Mucosa of descending colon (tissue), 3 donors: ENCODE measurements at regions of chr3 and their contacts with region 1.

Region 1: DNA sequence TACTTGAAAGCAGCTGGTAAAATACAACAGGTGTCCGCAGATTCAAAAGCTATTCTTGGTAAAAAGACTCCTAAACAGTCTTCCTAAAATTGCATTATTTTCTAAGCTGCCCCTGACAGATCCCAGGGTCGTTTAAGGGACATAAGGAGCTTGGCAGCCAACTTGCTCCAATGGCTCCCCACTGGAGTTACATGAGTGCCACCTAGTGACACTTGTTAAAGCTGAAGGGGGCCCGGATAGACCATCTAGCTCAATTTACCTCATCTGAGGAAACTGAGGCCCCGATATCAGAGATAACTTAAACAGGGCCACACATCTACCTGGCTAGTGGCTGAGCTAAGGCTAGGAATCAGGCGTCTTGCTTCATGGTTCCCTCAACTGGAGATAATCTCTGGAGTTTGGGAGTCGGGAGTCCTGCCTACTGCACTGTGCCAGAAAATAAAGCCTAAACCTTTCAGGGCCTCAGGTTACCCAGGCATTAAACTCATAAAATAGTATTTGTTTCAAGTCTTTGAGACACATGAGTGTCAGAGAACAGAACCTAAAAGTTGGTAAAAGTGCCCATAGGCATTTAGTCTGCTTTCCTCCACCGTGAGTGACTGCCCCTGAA is 6.5 kb upstream of the TBC1D23 start:
- DNase-seq: peak in 1 of 3 donors; percentile 69
- ATAC-seq: peak; percentile 78
- H3K4me3 ChIP-seq: no peak overlapping the region
- H3K4me1 ChIP-seq: no peaks in the 10 kb centered on the region
- CTCF ChIP-seq: peak; percentile 28

Region 2: DNA sequence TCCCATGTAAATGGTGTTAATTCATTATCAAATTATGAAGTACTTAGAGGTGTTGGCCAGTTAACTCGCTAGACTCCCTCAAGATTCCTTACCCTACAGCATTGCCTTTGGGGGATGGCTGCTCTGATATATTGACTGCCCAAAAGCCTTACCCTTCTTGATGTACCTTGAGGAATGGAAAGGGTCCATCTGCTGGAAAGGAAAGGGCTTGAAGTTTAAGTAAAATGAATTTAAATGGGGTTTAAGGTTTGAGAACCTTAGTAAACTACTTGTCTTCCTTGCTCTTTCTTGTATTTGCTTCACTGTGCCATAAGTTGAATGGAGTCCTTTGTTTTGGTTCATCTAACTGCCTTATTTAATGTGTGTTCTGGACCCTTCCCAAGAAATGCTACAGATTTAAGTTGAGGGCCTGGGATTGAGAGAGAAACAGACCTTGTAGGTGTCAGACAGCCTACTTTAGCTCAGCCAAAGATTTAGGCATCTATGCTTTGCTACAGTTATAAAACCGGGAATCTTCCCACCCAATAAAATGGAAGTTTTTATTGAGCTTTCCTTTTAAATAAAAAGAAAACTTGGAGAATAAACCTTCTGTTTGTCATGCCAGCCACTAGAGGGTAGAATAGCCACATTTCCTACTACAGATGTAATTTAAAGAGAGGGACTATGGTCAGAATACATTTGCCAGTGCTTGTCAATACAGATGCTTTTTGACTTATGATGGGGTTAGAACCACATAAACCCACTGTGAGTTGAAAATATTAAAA is 411.3 kb before region 1 on chr3:
- intact Hi-C with region 1: loop called (anchors 5 kb)
- DNase-seq: peak in 1 of 3 donors; percentile 24
- ATAC-seq: peak; percentile 83
- H3K4me3 ChIP-seq: no peak overlapping the region
- H3K4me1 ChIP-seq: peaks cover 4% of the 10 kb centered on the region
- CTCF ChIP-seq: peak; percentile 18

Region 3: GRCh38 chr3:100068826-100069225 is 185.4 kb before region 1 on chr3:
- intact Hi-C with region 1: loop called (anchors 10 kb)
- DNase-seq: peak; percentile 69 to 88 (median 85)
- ATAC-seq: peak; percentile 92
- H3K4me3 ChIP-seq: no peak overlapping the region
- H3K4me1 ChIP-seq: peaks cover 5% of the 10 kb centered on the region
- CTCF ChIP-seq: peak; percentile 62

Region 4: GRCh38 chr3:100073899-100074307 is 180.4 kb before region 1 on chr3:
- intact Hi-C with region 1: loop called (anchors 10 kb)
- DNase-seq: peak in 2 of 3 donors; percentile 33
- ATAC-seq: peak; percentile 60
- H3K4me3 ChIP-seq: no peak overlapping the region
- H3K4me1 ChIP-seq: peaks cover 14% of the 10 kb centered on the region
- CTCF ChIP-seq: no peak

Region 5: DNA sequence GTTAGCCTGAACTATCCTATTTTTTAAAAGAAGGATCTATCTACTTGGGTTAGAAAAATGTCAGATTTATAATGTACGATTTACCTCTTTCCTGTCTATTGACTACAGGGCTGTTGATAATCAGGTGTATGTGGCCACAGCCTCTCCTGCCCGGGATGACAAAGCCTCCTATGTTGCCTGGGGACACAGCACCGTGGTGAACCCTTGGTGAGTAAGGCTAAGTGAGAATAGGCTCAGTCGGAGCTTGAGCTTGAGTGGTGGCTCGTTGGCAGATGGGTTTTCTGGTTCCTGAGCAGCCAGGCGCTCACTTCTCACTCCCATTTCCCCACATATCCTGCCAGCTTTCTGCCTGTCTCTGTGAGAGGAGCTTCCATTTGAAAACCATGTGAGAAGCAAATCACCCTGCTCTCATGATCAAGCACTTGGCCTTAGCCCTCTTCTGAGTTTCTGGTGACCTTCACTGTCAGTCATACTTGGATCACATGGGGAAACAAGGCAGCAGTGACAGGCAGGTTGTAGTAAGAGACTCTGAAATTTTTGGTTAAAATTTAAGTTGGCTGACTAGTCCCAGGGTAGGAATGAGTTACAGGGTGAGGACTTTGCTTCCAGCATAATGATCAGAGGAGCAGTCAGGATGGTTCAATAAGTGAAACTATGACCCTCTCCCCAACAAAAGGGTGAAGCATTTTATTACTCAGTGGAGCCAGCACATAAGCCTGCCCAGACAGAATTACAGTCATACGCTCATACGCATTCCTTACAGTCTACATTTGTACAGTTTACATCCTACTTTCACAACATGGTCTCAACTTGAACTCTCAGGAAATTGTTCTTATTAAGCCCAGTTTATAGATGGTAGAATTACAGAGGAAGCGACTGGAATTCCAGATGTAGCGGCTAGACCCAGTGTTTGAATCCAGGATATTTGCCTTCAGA is 98.3 kb after region 1 on chr3:
- intact Hi-C with region 1: no loop called
- DNase-seq: no peak
- ATAC-seq: no peak
- H3K4me3 ChIP-seq: no peak overlapping the region
- H3K4me1 ChIP-seq: no peaks in the 10 kb centered on the region
- CTCF ChIP-seq: no peak